H1 (cell line): ENCODE measurements at regions of chr5 and their contacts with region 1.

Region 1: DNA sequence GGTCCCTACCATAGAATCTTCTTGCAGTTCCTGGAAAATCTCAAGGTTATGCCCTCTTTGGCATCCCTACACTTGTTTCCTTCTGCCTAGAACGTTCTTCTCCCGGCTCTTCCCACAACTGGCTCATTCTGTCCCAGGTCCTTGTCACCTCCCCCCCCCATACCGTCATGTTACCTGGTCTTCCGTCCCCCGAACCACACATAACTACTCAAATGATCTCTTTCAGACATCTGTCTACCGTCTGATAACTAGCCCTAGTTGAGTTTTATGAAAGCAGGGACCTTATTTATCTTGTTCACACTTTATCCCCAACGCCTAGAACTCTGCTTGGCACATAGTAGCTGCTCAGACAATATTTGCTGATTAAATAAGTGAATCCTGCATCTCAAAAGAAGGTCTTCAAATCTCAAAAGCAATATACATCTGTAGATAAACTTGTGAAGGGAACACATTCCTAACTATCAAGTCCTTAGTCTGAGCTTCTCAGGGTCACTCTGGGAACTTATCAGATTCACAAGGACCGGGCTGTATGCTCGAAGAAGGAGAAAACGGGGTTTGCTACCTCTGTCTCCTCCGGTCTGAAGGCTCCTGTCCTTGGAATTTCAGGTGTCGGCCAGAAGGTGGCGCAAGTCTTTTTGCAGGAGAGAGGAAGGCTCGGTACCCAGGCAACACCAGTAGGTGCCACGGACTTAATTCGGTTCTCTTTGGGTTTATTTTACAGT is 30.0 kb downstream of the LCP2 start:
- DNase-seq: peak in 1 of 2 experiments; percentile 83
- H3K4me3 ChIP-seq: no peak overlapping the region
- H3K27ac ChIP-seq: no peak overlapping the region
- H3K4me1 ChIP-seq: peaks cover 6 to 11% (median 8%) of the 10 kb centered on the region in 4 experiments; a peak in 4 of 7 replicates
- H3K27me3 ChIP-seq: no peaks in the 10 kb centered on the region; a peak in 1 of 7 replicates
- CTCF ChIP-seq: peak; percentile 85 to 93 (median 89)
- EP300 ChIP-seq: no peak
- POLR2A ChIP-seq: no peak
- RAD21 ChIP-seq: peak; percentile 74 to 80

Region 2: DNA sequence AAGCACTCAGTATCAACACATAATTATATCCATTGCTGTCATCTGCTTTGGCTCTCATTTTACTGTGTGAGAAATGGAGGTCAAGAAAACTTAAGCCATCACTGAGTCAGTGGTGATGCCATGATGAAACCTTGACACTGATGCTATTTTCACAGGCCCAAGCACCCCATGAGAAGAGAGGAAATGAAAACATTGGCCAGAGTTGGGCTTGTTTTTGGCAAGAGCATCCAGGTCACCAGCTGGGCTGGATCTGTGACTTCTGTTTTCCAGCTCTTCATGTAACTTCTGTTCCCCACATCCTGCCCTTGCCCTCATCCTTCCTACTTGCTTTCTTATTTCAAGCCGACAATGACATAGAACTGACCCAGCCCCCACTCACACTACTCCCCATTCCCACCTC is 19.9 kb after region 1 on chr5:
- CTCF ChIA-PET with region 1: interaction called, 14 read pairs
- POLR2A ChIA-PET with region 1: no interaction called
- DNase-seq: no peak
- H3K4me3 ChIP-seq: no peak overlapping the region
- H3K27ac ChIP-seq: no peak overlapping the region
- H3K4me1 ChIP-seq: peaks cover 2 to 7% (median 3%) of the 10 kb centered on the region in 4 experiments; a peak in 4 of 7 replicates
- H3K27me3 ChIP-seq: no peaks in the 10 kb centered on the region
- CTCF ChIP-seq: no peak
- EP300 ChIP-seq: no peak
- POLR2A ChIP-seq: no peak
- RAD21 ChIP-seq: no peak

Region 3: GRCh38 chr5:170315154-170315553 is 47.6 kb after region 1 on chr5:
- CTCF ChIA-PET with region 1: interaction called, 10 read pairs
- POLR2A ChIA-PET with region 1: no interaction called
- DNase-seq: no peak
- H3K4me3 ChIP-seq: no peak overlapping the region
- H3K27ac ChIP-seq: no peak overlapping the region
- H3K4me1 ChIP-seq: peaks cover 0 to 6% (median 1%) of the 10 kb centered on the region in 4 experiments; a peak in 5 of 7 replicates
- H3K27me3 ChIP-seq: no peaks in the 10 kb centered on the region
- CTCF ChIP-seq: no peak
- EP300 ChIP-seq: no peak
- POLR2A ChIP-seq: no peak
- RAD21 ChIP-seq: no peak

Region 4: DNA sequence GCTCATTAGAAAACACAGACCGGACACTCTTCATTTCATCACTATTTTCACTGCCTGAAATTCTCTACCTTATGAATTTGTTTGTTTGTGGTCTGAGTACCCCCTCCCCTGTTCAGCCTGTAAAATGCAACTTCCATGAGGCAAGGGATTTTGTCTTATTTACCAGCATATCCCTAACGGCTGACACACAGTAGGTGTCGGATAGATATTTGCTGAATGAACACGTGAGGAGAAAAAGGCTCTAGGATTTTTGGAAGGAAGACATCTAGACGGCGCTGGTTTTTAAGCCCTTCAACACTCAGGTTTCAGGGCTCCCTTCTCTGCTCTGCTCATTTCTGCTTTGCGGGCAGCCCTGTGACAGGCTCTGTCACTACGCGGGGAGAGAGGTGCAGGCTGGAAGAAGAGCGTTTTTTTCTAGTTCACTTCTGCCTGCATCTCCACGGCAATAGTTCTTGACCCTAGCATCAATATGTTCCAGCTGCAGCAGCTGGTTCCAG is 80.6 kb after region 1 on chr5:
- CTCF ChIA-PET with region 1: interaction called, 44 read pairs
- POLR2A ChIA-PET with region 1: no interaction called
- DNase-seq: no peak
- H3K4me3 ChIP-seq: no peak overlapping the region
- H3K27ac ChIP-seq: no peak overlapping the region
- H3K4me1 ChIP-seq: peaks cover 9 to 13% (median 10%) of the 10 kb centered on the region in 4 experiments; a peak in 6 of 7 replicates
- H3K27me3 ChIP-seq: peaks cover 0 to 4% (median 1%) of the 10 kb centered on the region in 4 experiments; a peak in 5 of 7 replicates
- CTCF ChIP-seq: peak in 2 of 3 experiments; percentile 27 to 28; a peak in 2 of 4 replicates
- EP300 ChIP-seq: no peak
- POLR2A ChIP-seq: no peak
- RAD21 ChIP-seq: peak; percentile 57 to 68

Region 5: DNA sequence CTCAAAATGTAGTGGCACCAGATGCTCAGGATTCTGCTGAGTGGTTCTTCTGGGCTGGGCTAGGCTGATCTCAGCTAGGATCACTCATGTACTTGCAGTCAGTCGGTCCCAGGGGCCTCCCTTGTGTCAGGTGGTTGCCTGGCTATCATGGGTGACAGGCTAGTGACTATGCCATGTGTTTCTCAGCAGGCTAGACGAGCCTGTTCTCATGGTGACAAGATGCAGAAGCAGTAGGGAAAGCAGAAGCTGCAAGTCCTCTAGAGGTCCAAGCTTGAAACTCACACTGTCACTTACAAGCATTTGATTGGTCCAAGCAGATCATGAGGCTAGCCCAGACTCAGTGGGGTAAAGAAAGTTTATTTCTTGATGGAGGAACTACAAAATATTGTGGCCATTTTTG is 136.8 kb after region 1 on chr5:
- CTCF ChIA-PET with region 1: interaction called, 75 read pairs
- POLR2A ChIA-PET with region 1: no interaction called
- DNase-seq: no peak
- H3K4me3 ChIP-seq: no peak overlapping the region
- H3K27ac ChIP-seq: no peak overlapping the region
- H3K4me1 ChIP-seq: peaks cover 9 to 15% (median 13%) of the 10 kb centered on the region in 4 experiments; a peak in 6 of 7 replicates
- H3K27me3 ChIP-seq: no peaks in the 10 kb centered on the region
- CTCF ChIP-seq: no peak
- EP300 ChIP-seq: no peak
- POLR2A ChIP-seq: no peak
- RAD21 ChIP-seq: no peak